ENCODE measurements at regions of chr2 and their contacts with region 1.

Region 1: GRCh38 chr2:146927080-146927711 is 917.6 kb upstream of the ACVR2A start:
- DNase-seq: peak; percentile 59
- H3K4me3 ChIP-seq: no peak overlapping the region
- H3K27ac ChIP-seq: no peak overlapping the region
- H3K4me1 ChIP-seq: no peaks in the 10 kb centered on the region
- H3K27me3 ChIP-seq: no peaks in the 10 kb centered on the region
- CTCF ChIP-seq: peak; percentile 88

Region 2: DNA sequence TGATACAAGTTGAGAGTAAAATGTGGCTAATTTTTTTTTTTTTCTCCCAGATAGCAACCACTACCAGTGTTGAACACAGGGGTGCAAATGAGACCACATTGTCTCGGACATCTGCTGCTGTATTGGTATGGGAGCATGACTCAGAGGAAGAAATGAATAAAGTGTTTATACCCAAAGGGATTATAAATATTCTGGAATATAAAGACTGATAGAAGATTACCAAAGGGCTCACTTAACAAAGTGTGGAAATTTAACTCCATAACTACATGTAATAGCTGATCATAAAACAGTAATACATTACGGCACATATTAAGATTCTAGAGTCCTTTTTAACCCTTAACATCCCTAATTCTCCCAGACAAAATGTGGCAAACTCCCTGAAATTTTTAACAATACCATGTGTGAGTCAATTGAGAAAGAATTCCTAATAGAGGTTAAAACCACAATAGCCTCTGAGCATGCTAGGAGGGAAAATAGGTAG is 105.3 kb before region 1 on chr2:
- CTCF ChIA-PET with region 1: no interaction called
- dilution Hi-C with region 1: no loop called
- in situ Hi-C with region 1: no loop called
- intact Hi-C with region 1: loop called (anchors 5 kb)
- DNase-seq: peak; percentile 61
- H3K4me3 ChIP-seq: peak overlapping the region in 1 of 3 experiments; percentile 35
- H3K27ac ChIP-seq: peak overlapping the region; percentile 59
- H3K4me1 ChIP-seq: peaks cover 30% of the 10 kb centered on the region
- H3K27me3 ChIP-seq: no peaks in the 10 kb centered on the region
- CTCF ChIP-seq: peak; percentile 14 to 30

Region 3: DNA sequence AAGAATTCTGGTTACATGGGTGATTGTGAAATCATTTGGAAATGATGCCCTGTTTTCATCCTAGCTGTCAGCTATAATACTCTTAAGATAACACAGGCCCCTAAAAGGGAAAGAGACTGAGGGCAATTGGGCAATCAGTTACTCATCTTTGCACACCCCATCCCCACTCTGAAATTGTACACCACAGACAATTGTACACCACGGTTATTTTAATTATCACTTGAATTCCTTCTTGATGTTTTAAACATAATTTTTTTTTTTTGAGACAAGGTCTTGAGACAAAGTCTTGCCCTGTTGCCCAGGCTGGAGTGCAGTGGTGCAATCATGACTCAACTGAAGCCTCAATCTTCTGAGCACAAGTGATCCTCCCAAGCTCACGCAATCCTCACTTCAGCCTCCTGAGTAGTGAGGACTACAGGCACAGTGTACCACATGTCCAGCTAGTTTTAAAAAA is 55.2 kb after region 1 on chr2:
- CTCF ChIA-PET with region 1: no interaction called
- dilution Hi-C with region 1: no loop called
- in situ Hi-C with region 1: no loop called
- intact Hi-C with region 1: loop called (anchors 2 kb)
- DNase-seq: peak; percentile 94
- H3K4me3 ChIP-seq: no peak overlapping the region
- H3K27ac ChIP-seq: peak overlapping the region; percentile 69
- H3K4me1 ChIP-seq: peaks cover 71% of the 10 kb centered on the region
- H3K27me3 ChIP-seq: no peaks in the 10 kb centered on the region
- CTCF ChIP-seq: no peak

Region 4: DNA sequence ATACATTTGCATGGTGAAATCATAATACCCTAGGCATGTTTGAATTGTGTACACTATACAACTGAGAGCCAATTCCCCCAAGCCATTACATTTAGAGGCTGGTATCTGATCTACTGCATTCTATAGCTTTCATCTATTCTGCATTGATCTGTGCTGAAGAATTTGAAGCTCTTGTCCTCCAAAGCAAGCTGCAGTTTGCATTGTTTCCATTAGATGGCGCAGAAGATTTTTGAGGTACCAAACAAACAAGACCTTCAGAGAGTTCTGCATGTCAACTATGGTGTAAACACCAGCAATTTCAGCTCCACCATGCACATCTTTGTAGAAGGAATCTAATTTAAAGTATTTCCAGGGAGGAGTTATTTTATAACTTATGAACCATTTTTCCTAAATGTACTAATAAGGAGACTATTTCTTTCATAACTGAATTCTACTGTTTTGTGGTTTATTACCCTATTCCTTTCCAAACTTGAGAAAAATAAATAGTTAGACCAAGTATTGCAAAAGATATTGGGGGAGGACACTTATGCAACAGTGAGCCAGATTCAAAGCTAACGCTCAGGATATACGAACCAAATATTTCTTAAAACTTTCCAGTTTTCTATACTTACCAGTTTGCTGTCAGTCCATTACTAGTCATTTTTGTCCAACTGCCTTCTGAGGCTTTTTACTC is 155.8 kb after region 1 on chr2:
- CTCF ChIA-PET with region 1: no interaction called
- dilution Hi-C with region 1: no loop called
- in situ Hi-C with region 1: no loop called
- intact Hi-C with region 1: loop called (anchors 2 kb)
- DNase-seq: peak; percentile 58
- H3K4me3 ChIP-seq: no peak overlapping the region
- H3K27ac ChIP-seq: no peak overlapping the region
- H3K4me1 ChIP-seq: no peaks in the 10 kb centered on the region
- H3K27me3 ChIP-seq: no peaks in the 10 kb centered on the region
- CTCF ChIP-seq: peak; percentile 90 to 98

Measured in mammary epithelial cell (primary cell).